ENCODE measurements at regions of chr12 and their contacts with region 1.

Region 1: GRCh38 chr12:124949779-124950728 is 35.6 kb upstream of the UBC start:
- DNase-seq: no peak
- H3K4me3 ChIP-seq: no peak overlapping the region
- H3K27ac ChIP-seq: no peak overlapping the region
- H3K4me1 ChIP-seq: no peaks in the 10 kb centered on the region
- H3K27me3 ChIP-seq: no peaks in the 10 kb centered on the region
- CTCF ChIP-seq: no peak
- POLR2A ChIP-seq: no peak

Region 2: DNA sequence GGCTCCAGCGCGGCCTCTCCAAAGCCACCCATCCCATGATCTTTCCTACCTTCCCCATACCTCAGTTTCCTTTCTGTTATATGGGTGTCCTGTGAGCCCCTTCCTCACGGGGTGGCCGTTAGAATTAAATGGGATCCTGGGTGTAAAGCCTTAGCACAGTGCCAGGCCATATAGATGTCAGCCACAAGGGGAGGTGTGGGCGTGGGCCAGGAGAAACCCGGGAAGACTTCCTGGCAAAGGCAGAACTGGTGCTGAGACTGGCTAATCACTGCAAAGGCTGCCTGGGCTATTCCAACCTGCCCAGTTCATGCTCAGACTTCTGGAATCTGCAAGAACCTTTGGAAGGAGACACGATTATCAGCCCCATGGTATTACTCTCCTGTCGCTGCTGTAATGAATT is 371.6 kb before region 1 on chr12:
- intact Hi-C with region 1: no loop called
- DNase-seq: no peak
- H3K4me3 ChIP-seq: no peak overlapping the region
- H3K27ac ChIP-seq: no peak overlapping the region
- H3K4me1 ChIP-seq: peaks cover 0 to 9% of the 10 kb centered on the region in 2 donors
- H3K27me3 ChIP-seq: no peaks in the 10 kb centered on the region
- CTCF ChIP-seq: no peak
- POLR2A ChIP-seq: no peak

Region 3: DNA sequence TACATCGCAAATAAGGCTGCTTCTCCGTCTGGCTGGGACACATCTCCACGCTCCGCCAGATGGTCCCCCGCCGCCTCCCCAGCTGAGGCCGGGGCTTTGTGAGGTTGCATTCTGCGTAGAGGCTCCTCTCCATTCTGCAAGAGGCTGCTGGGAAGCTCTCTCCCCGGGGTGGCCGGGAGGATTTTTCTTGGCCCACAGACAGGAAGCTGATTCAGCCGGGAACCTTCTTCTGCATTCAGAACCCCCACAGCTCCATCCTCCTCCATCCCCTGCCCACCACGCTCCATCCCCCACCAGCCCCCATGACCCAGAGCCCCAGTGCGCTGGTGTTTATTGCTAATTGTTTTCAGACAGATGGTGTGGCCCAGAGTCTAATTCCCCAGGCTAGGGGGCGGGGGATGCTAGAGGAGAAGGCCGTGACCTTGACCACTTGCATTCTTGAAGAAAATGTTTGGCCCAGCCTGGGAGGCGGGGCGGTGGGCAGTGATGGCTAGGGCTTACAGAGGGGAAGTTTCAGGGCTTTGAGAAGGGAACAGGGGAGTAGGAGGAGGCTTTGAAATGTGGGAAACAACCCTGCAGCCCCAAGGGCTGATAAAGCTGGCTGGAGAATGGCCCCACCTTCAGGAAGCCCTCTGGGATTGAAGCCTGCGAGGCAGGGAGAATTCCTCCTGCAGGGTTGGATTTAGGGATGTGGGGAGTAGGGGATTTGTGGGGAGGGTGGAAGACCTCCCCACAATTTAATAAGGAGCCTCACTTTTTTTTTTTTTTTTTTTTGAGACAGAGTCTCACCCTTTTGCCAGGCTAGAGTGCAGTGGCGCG is 294.1 kb before region 1 on chr12:
- intact Hi-C with region 1: no loop called
- DNase-seq: peak; percentile 45 to 56
- H3K4me3 ChIP-seq: peak overlapping the region in 1 of 3 donors; percentile 10
- H3K27ac ChIP-seq: peak overlapping the region; percentile 73 to 90 (median 88)
- H3K4me1 ChIP-seq: peaks cover 3 to 18% of the 10 kb centered on the region in 2 donors
- H3K27me3 ChIP-seq: no peaks in the 10 kb centered on the region
- CTCF ChIP-seq: no peak
- POLR2A ChIP-seq: peak in 1 of 2 donors; percentile 3

Region 4: DNA sequence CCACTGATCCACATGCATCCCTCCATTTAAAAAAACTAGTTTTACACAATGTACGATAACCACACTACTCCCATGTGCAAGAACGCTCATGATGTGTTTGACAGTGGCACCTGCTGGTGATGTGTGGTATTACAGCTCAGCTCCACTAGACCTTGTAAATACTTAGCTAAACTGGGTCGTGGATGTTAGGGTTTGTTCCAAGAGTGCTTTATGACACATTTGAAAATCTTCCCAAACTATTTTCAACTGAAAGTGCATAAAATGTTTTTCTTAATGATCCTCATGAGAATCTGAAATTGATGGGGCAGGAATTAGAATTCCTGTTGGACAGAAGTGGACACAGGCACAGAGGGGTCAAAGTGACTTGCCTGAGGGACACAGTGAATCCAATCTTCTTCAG is 185.6 kb before region 1 on chr12:
- intact Hi-C with region 1: no loop called
- DNase-seq: peak in 1 of 2 donors; percentile 30
- H3K4me3 ChIP-seq: no peak overlapping the region
- H3K27ac ChIP-seq: no peak overlapping the region
- H3K4me1 ChIP-seq: peaks cover 5 to 19% of the 10 kb centered on the region in 2 donors
- H3K27me3 ChIP-seq: no peaks in the 10 kb centered on the region
- CTCF ChIP-seq: peak; percentile 29 to 63 (median 52)
- POLR2A ChIP-seq: no peak

Region 5: GRCh38 chr12:124979568-124979967 is 29.5 kb after region 1 on chr12:
- intact Hi-C with region 1: loop called (anchors 2 kb)
- DNase-seq: no peak
- H3K4me3 ChIP-seq: no peak overlapping the region
- H3K27ac ChIP-seq: no peak overlapping the region
- H3K4me1 ChIP-seq: no peaks in the 10 kb centered on the region
- H3K27me3 ChIP-seq: no peaks in the 10 kb centered on the region
- CTCF ChIP-seq: no peak
- POLR2A ChIP-seq: no peak